ENCODE measurements at regions of chr9 and their contacts with region 1.

Region 1: GRCh38 chr9:134995792-134996120 is 78.0 kb upstream of the FCN1 start:
- DNase-seq: no peak
- H3K4me3 ChIP-seq: no peak overlapping the region
- H3K27ac ChIP-seq: no peak overlapping the region
- H3K4me1 ChIP-seq: peaks cover 20% of the 10 kb centered on the region
- H3K27me3 ChIP-seq: no peaks in the 10 kb centered on the region
- CTCF ChIP-seq: no peak

Region 2: DNA sequence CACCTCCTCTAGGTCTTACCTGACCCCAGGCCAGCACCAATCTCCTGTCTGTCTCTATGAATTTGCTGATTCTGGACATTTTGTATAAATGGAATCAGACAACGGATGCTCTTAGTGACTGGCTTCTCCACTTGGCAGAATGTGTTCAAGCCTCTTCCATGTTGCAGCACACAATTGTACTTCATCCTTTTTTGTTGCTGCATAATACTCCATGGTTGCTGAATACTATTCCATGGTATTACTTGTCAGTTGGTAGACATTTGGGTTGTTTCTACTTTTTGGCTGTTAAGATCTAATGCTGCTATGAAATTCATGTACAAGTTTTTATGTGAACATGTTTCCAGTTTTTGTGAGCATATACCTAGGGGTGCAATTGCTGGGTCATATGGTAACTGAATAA is 43.8 kb before region 1 on chr9:
- CTCF ChIA-PET with region 1: no interaction called
- POLR2A ChIA-PET with region 1: no interaction called
- intact Hi-C with region 1: loop called (anchors 2 kb)
- DNase-seq: no peak
- H3K4me3 ChIP-seq: no peak overlapping the region
- H3K27ac ChIP-seq: no peak overlapping the region
- H3K4me1 ChIP-seq: no peaks in the 10 kb centered on the region
- H3K27me3 ChIP-seq: no peaks in the 10 kb centered on the region
- CTCF ChIP-seq: no peak